Ovary (tissue), 10 donors: ENCODE measurements at regions of chr2 and their contacts with region 1.

Region 1: DNA sequence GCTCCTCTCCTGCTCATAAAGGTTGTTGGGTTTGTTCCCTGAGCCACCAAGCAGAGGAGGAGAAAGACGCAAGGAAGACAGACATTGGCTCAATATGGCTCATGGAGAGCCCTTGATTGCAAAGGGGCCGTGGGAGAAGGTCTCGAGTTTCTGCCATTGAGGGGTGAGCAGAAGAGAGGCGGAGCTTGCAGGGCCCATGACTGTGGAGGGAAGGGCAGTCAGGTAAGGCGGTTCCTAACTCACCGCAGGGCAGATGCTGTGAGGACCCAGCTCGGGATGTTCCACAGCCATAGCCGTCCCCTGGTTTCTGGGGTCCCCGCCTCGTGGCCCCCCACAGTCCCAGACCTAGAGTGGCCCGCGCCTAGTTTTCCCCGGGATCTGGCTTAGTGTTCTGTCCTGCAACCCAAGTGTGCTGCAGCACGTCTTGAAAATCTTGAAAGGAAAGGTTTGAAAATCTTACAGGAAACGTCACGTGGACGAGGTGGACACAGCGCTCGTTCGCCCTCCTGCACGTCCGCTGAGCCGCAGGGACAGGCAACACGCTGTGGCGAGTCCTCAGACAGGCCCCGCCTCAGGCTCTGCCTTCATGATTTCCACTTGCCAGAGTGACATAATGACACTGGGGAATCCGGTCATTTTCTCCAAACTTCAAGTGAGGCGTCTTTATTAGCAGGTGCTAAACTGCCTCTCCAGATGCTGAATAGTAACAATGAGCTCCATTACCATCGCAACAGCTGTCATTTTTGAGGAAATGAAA is 105.5 kb upstream of the HDAC4 start:
- DNase-seq: no peak
- H3K4me3 ChIP-seq: no peak overlapping the region
- H3K27ac ChIP-seq: no peak overlapping the region
- H3K4me1 ChIP-seq: no peaks in the 10 kb centered on the region
- H3K27me3 ChIP-seq: no peaks in the 10 kb centered on the region
- CTCF ChIP-seq: no peak
- EP300 ChIP-seq: no peak
- POLR2A ChIP-seq: no peak

Region 2: GRCh38 chr2:238046725-238047270 is 1459.5 kb before region 1 on chr2:
- intact Hi-C with region 1: loop called in 1 of 4 experiments (anchors 5 kb)
- DNase-seq: no peak
- H3K4me3 ChIP-seq: no peak overlapping the region
- H3K27ac ChIP-seq: no peak overlapping the region
- H3K4me1 ChIP-seq: no peaks in the 10 kb centered on the region
- H3K27me3 ChIP-seq: no peaks in the 10 kb centered on the region
- CTCF ChIP-seq: no peak
- EP300 ChIP-seq: no peak
- POLR2A ChIP-seq: no peak